Heart left ventricle (tissue), 16 donors: ENCODE measurements at regions of chr2 and their contacts with region 1.

Region 1: GRCh38 chr2:27211829-27212627 is at the starts of genes ATRAID and SLC5A6:
- DNase-seq: peak; percentile 89 to 94 (median 91)
- ATAC-seq: peak; percentile 95 to 98 (median 98)
- H3K4me3 ChIP-seq: peak within 1 kb of the TSS; percentile 63 to 97 (median 80)
- H3K27ac ChIP-seq: peak within 1 kb of the TSS; percentile 93 to 100 (median 98)
- H3K4me1 ChIP-seq: peaks cover 4 to 25% (median 18%) of the 10 kb centered on the region in 12 donors
- H3K27me3 ChIP-seq: no peaks in the 10 kb centered on the region
- CTCF ChIP-seq: no peak
- POLR2A ChIP-seq: peak in 1 of 2 donors; percentile 84
- total RNA-seq, gene ATRAID: 96.9 to 210 (median 144) TPM
- total RNA-seq, gene SLC5A6: 6.3 to 16.7 (median 10.3) TPM

Region 2: GRCh38 chr2:27032495-27033252 is 179.4 kb before region 1 on chr2 and contains the start of gene TMEM214:
- intact Hi-C with region 1: loop called in 1 of 10 experiments (anchors 2 kb)
- DNase-seq: peak; percentile 91 to 96 (median 92)
- ATAC-seq: peak; percentile 93 to 99 (median 98)
- H3K4me3 ChIP-seq: peak within 1 kb of the TSS; percentile 76 to 99 (median 94)
- H3K27ac ChIP-seq: peak within 1 kb of the TSS; percentile 59 to 92 (median 85)
- H3K4me1 ChIP-seq: peaks cover 0 to 29% (median 17%) of the 10 kb centered on the region in 12 donors
- H3K27me3 ChIP-seq: no peaks in the 10 kb centered on the region
- CTCF ChIP-seq: peak in 2 of 12 donors; percentile 12 to 16
- POLR2A ChIP-seq: peak in 1 of 2 donors; percentile 86
- total RNA-seq, gene TMEM214: 18.3 to 58.0 (median 31.6) TPM

Region 3: GRCh38 chr2:27133905-27134780 is 77.9 kb before region 1 on chr2 and contains the start of gene PREB:
- intact Hi-C with region 1: loop called in 5 of 10 experiments (anchors 1 to 5 kb)
- DNase-seq: peak; percentile 98 to 100 (median 98)
- ATAC-seq: peak; percentile 93 to 98 (median 96)
- H3K4me3 ChIP-seq: peak within 1 kb of the TSS; percentile 71 to 98 (median 88)
- H3K27ac ChIP-seq: peak within 1 kb of the TSS in 11 of 12 donors; percentile 76 to 94 (median 90)
- H3K4me1 ChIP-seq: peaks cover 7 to 19% (median 11%) of the 10 kb centered on the region in 12 donors
- H3K27me3 ChIP-seq: no peaks in the 10 kb centered on the region
- CTCF ChIP-seq: peak in 3 of 12 donors; percentile 6 to 34 (median 21)
- POLR2A ChIP-seq: peak; percentile 21 to 91
- total RNA-seq, gene PREB: 41.1 to 74.5 (median 48.7) TPM

Region 4: DNA sequence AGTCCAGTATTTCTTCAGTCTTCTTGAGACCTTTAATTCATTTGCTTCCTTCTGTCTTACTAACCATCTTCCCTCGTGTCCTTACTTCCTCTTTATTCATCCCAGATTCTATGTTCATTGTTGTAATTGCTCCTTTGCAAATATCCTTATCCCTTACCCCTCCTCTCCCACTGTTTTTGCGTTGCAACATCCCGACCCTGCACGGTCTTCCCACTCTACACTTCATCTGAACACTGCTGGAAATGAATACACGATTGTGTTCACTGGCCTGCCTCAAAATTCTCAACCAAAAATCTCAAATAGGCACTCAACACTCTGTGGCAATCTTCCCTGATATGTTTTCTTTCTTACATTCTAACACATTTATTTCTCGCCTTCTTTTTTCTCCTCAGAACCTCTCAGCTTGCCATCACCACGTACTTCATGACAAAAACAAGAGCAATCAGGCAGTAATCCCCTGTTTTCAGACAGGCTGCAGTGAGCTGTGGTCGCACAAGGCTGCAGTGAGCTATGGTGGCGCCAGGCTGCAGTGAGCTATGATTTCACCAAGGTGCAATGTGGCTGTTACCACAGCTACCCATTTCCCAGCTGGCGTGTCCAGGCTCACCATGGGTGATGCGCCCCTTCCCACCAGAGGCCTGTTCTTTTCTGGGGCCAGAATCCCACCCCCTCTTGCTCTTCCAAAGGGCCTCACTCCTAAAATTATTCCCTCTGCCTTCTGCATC is 37.5 kb before region 1 on chr2:
- intact Hi-C with region 1: no loop called
- DNase-seq: no peak
- ATAC-seq: no peak
- H3K4me3 ChIP-seq: no peak overlapping the region
- H3K27ac ChIP-seq: no peak overlapping the region
- H3K4me1 ChIP-seq: peaks cover 0 to 4% (median 0%) of the 10 kb centered on the region in 12 donors
- H3K27me3 ChIP-seq: peaks cover 0 to 9% (median 0%) of the 10 kb centered on the region in 9 donors
- CTCF ChIP-seq: no peak
- POLR2A ChIP-seq: no peak

Region 5: GRCh38 chr2:27428213-27428977 is 216.4 kb after region 1 on chr2 and contains the start of gene NRBP1:
- intact Hi-C with region 1: loop called in 1 of 10 experiments (anchors 5 kb)
- DNase-seq: peak; percentile 92 to 98 (median 95)
- ATAC-seq: peak; percentile 96 to 98 (median 96)
- H3K4me3 ChIP-seq: peak within 1 kb of the TSS; percentile 60 to 100 (median 96)
- H3K27ac ChIP-seq: peak within 1 kb of the TSS; percentile 93 to 100 (median 98)
- H3K4me1 ChIP-seq: peaks cover 4 to 46% (median 31%) of the 10 kb centered on the region in 12 donors
- H3K27me3 ChIP-seq: no peaks in the 10 kb centered on the region
- CTCF ChIP-seq: peak in 1 of 12 donors; percentile 3
- POLR2A ChIP-seq: peak; percentile 4 to 91
- total RNA-seq, gene NRBP1: 43.5 to 78.6 (median 62.8) TPM

Region 6: DNA sequence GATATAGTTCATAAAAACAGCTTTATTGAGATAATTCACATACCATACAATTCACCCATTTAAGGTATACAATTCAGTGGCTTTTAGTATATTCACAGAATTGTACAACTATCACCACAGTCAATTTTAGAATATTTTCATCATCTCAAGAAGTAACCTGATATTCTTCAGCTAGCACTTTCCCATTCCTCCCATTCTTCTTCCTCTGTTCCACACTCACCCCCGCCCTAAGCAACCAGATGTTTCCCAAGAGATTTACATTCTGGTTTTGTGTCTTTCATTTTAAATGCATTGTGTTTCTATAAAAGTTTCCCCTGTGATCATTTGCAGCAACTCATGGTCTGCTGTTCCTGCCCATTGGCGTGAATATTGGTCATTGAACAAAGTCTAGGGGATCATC is 422.3 kb after region 1 on chr2:
- intact Hi-C with region 1: loop called in 1 of 10 experiments (anchors 5 kb)
- DNase-seq: no peak
- ATAC-seq: no peak
- H3K4me3 ChIP-seq: no peak overlapping the region
- H3K27ac ChIP-seq: no peak overlapping the region
- H3K4me1 ChIP-seq: peaks cover 0 to 16% (median 8%) of the 10 kb centered on the region in 12 donors
- H3K27me3 ChIP-seq: no peaks in the 10 kb centered on the region
- CTCF ChIP-seq: no peak
- POLR2A ChIP-seq: no peak